PC-9 (cell line): ENCODE measurements at regions of chr10 and their contacts with region 1.

Region 1: DNA sequence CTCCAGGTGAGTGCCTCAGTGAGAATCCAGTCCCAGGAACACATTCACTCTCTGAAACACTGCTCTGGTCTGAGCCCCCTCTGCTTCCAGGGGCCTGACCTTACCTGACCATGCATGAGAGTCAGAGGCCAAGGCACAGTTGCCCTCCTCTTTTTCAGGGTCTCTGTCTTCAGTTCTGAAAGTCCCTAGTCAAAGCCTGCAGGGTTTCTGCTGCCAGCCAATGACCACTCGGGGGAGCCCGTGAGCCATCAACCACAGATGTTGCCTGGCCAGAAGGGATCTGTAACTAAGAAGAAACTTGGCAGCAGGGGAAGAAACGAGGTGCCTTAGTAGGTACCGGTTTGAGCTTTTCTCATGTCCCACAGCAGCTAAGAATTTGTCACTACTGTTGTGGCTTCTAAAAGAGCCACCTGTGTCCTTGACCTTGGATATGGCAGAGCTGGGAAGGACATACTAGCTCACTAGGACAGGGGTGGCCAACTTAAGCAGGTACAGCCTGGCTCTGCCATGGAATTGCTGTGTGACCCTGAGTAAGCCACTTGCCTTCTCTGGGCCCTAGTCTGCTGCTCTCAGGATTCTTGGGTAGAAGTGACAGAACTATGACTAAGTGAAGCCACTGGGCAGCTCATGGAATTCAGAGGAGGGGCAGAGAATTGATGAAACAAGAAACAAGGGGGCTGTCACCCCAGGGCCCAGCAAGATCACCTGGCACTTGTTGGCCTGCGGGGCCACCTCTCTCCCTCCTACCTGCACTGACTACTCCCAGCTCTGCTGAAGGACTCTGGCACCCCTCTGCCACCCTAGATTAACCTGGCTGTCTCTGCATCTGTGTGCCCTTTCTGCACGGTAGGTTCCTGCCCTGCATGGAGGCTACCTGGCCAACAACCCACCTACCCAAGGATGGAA is 83.8 kb upstream of the GPR26 start:
- DNase-seq: peak; percentile 40 to 60
- H3K4me3 ChIP-seq: no peak overlapping the region
- H3K27ac ChIP-seq: no peak overlapping the region
- H3K4me1 ChIP-seq: no peaks in the 10 kb centered on the region
- H3K27me3 ChIP-seq: peaks cover 25% of the 10 kb centered on the region
- CTCF ChIP-seq: peak; percentile 76

Region 2: GRCh38 chr10:123678376-123678775 is 96.0 kb after region 1 on chr10:
- CTCF ChIA-PET with region 1: no interaction called
- POLR2A ChIA-PET with region 1: no interaction called
- intact Hi-C with region 1: no loop called
- DNase-seq: no peak
- H3K4me3 ChIP-seq: no peak overlapping the region
- H3K27ac ChIP-seq: no peak overlapping the region
- H3K4me1 ChIP-seq: no peaks in the 10 kb centered on the region
- H3K27me3 ChIP-seq: peaks cover 20% of the 10 kb centered on the region; the same call in 1 of the 2 replicates
- CTCF ChIP-seq: no peak

Region 3: DNA sequence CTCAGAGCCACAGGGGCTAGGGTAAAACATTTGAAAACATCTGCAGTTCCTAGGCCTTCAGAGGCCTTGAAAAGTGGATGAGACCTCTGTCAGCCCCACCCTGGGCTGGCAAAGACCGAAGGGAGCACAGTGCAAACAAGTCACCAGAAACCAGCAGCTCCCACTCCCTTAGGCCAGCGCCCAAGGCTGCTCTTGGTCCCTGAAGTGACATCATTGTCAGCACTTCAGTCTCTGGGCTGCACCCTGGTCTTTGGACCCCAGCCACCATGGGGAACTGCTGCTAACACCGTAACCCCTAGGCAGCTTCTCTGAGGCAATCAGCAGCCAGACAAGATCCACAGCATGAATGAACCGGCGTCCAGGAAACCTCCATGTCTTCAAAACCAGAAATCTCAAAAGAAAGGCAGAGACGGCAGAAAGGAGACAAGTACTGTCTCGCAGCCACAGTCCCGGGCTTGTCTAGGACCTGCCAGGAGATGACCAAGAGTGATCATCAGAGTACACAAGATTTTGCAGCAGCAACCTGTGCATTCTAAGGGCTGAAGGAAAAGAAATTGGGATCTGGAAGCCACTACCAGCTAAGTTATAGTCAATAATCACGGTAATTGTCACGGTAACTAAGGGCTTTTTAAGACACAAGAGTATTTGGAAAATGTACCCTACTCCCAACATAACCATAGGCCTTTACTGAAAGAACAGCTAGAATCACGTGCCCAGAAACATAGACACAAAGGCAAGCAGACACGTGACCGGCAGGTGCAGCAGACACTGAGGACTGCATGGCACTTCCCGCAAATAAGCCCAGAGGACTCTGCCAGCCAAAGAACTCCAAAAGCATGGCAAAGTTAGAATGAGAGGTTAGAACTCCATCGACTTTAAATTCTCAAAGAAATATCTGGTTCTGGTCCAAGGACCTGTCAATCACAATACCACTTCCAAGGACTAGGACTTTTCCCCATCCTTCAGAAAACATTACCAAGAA is 286.0 kb after region 1 on chr10:
- CTCF ChIA-PET with region 1: no interaction called
- POLR2A ChIA-PET with region 1: no interaction called
- intact Hi-C with region 1: loop called (anchors 5 kb)
- DNase-seq: no peak
- H3K4me3 ChIP-seq: no peak overlapping the region
- H3K27ac ChIP-seq: no peak overlapping the region
- H3K4me1 ChIP-seq: no peaks in the 10 kb centered on the region
- H3K27me3 ChIP-seq: peaks cover 56% of the 10 kb centered on the region
- CTCF ChIP-seq: no peak

Region 4: GRCh38 chr10:123967396-123968243 is 385.3 kb after region 1 on chr10:
- CTCF ChIA-PET with region 1: no interaction called
- POLR2A ChIA-PET with region 1: no interaction called
- intact Hi-C with region 1: loop called (anchors 1 kb)
- DNase-seq: peak in 1 of 2 experiments; percentile 49
- H3K4me3 ChIP-seq: no peak overlapping the region
- H3K27ac ChIP-seq: no peak overlapping the region
- H3K4me1 ChIP-seq: no peaks in the 10 kb centered on the region
- H3K27me3 ChIP-seq: peaks cover 47% of the 10 kb centered on the region
- CTCF ChIP-seq: peak; percentile 77

Region 5: GRCh38 chr10:124388823-124389612 is 806.7 kb after region 1 on chr10:
- CTCF ChIA-PET with region 1: no interaction called
- POLR2A ChIA-PET with region 1: no interaction called
- intact Hi-C with region 1: loop called (anchors 5 kb)
- DNase-seq: peak; percentile 55 to 85
- H3K4me3 ChIP-seq: peak overlapping the region; percentile 46; the same call in 1 of the 2 replicates
- H3K27ac ChIP-seq: no peak overlapping the region
- H3K4me1 ChIP-seq: peaks cover 13% of the 10 kb centered on the region
- H3K27me3 ChIP-seq: no peaks in the 10 kb centered on the region
- CTCF ChIP-seq: peak; percentile 80

Region 6: DNA sequence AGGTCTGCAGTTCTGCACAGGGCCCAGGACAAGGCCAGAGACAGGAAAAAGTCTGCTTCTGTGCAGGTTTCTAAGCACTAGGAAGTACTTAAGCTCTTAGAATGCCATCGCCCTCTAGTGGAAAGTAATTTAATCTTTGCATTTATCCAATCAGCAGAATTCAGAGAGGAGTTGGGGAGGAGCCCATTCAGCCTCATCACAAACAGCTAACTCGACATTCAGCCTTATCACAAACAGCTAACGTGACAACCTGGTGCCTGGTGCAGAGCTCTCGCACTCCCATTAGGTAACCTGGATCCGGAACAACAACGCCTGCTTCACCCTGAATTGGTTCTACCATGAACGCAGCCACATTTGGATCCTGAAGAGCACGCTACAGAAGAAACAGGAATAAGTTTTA is 821.2 kb after region 1 on chr10:
- CTCF ChIA-PET with region 1: no interaction called
- POLR2A ChIA-PET with region 1: no interaction called
- intact Hi-C with region 1: loop called (anchors 5 kb)
- DNase-seq: peak in 1 of 2 experiments; percentile 65
- H3K4me3 ChIP-seq: no peak overlapping the region
- H3K27ac ChIP-seq: no peak overlapping the region
- H3K4me1 ChIP-seq: no peaks in the 10 kb centered on the region
- H3K27me3 ChIP-seq: no peaks in the 10 kb centered on the region
- CTCF ChIP-seq: peak; percentile 65

Region 7: DNA sequence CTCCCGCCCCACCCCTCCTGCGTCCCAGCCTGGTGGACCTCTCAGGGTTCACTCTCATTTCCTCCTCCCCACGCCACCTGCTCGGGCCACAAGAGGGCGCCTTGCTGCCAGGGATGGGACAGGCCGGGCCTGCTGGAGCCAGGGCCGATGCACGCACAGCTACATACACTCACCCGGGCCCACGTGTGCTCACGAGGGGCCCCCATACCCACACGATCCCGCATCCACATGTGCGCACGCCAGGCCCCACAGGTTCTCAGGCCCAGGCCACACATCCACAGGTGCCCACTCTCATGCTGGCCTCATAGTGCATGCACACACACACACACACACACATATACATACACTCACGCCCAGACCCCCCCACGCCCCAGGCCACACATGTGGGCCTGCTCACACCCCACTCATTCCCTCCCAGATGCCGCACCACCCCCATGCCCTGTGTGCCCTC is 947.9 kb after region 1 on chr10:
- CTCF ChIA-PET with region 1: no interaction called
- POLR2A ChIA-PET with region 1: no interaction called
- intact Hi-C with region 1: loop called (anchors 10 kb)
- DNase-seq: peak; percentile 45 to 79
- H3K4me3 ChIP-seq: no peak overlapping the region
- H3K27ac ChIP-seq: no peak overlapping the region
- H3K4me1 ChIP-seq: no peaks in the 10 kb centered on the region
- H3K27me3 ChIP-seq: no peaks in the 10 kb centered on the region
- CTCF ChIP-seq: peak; percentile 77

Region 8: GRCh38 chr10:124677749-124678556 is 1095.6 kb after region 1 on chr10:
- CTCF ChIA-PET with region 1: no interaction called
- POLR2A ChIA-PET with region 1: no interaction called
- intact Hi-C with region 1: no loop called
- DNase-seq: no peak
- H3K4me3 ChIP-seq: no peak overlapping the region
- H3K27ac ChIP-seq: no peak overlapping the region
- H3K4me1 ChIP-seq: no peaks in the 10 kb centered on the region
- H3K27me3 ChIP-seq: no peaks in the 10 kb centered on the region
- CTCF ChIP-seq: no peak